ENCODE measurements at regions of chr19 and their contacts with region 1.

Region 1: GRCh38 chr19:52189735-52190486 is at the start of gene PPP2R1A:
- DNase-seq: peak; percentile 99
- H3K4me3 Mint-ChIP-seq: peak within 1 kb of the TSS; percentile 97
- H3K27ac Mint-ChIP-seq: peak within 1 kb of the TSS; percentile 99
- H3K4me1 Mint-ChIP-seq: peaks cover 29% of the 10 kb centered on the region
- H3K27me3 Mint-ChIP-seq: no peaks in the 10 kb centered on the region
- total RNA-seq, gene PPP2R1A: 226 and 237 TPM in 2 replicates

Region 2: DNA sequence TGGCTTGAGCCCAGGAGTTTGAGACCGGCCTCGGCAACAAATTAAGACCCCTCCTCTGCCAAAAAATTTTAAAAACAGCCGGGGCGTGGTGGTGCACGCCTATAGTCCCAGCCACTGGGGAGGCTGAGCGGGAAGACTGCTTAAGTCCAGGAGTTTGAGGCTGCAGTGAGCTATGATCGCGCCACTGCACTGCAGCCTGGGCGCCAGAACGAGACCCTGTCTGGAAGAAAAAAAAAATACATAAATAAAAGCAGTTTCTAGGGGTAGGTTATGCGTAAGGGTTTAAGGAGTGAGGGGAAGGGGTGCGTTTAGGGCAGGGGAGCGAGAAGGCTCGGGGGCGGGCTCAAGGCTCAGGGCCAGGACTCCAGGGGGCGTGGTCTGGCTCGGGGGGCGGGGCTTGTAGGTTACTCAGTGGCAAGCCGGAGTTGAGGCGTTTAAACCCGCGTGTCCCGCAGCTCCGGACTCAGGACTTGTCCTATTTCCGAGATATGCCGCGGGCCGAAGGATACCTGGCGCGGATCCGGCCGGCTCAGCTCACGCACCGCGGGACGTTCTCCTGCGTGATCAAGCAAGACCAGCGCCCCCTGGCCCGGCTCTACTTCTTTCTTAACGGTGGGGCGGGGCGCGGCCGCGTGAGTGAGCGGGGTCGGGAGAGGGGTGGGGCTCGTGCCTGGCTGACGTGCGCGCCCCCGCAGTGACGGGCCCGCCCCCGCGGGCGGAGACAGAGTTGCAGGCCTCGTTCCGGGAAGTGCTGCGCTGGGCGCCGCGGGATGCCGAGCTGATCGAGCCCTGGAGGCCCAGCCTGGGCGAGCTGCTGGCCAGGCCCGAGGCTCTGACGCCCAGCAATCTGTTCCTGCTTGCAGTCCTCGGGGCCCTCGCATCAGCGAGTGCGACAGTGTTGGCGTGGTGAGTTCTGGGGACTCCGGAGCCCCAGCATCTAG is 486.1 kb before region 1 on chr19:
- intact Hi-C with region 1: loop called (anchors 1 kb)
- DNase-seq: peak; percentile 99
- H3K4me3 Mint-ChIP-seq: peak overlapping the region; percentile 90
- H3K27ac Mint-ChIP-seq: peak overlapping the region; percentile 95
- H3K4me1 Mint-ChIP-seq: peaks cover 24% of the 10 kb centered on the region
- H3K27me3 Mint-ChIP-seq: peaks cover 3% of the 10 kb centered on the region

Region 3: DNA sequence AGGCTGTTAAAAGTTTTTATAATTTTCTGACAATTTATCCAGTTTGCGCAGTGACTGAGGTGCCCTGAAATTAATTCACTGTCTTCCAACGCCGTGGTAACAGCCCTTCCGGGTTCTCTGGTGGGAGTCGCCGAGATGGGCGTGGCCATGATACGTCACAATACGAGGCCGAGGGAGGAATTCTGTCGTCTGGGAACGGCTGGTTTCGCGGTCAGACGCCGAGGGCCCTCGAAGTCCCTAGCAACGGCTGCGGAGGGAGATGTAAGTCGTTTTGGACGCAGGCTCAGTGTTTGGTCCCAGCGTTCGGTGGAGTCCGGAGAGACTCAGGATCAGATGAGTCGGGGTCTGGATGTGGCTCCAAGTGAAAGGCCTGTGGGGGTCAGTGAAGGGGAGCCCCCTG is 240.9 kb before region 1 on chr19:
- intact Hi-C with region 1: no loop called
- DNase-seq: no peak
- H3K4me3 Mint-ChIP-seq: no peak overlapping the region
- H3K27ac Mint-ChIP-seq: no peak overlapping the region
- H3K4me1 Mint-ChIP-seq: no peaks in the 10 kb centered on the region
- H3K27me3 Mint-ChIP-seq: no peaks in the 10 kb centered on the region

Region 4: GRCh38 chr19:52028027-52028779 is 161.7 kb before region 1 on chr19 and contains the start of gene ZNF614:
- intact Hi-C with region 1: loop called (anchors 1 kb)
- DNase-seq: peak; percentile 96
- H3K4me3 Mint-ChIP-seq: peak within 1 kb of the TSS; percentile 94
- H3K27ac Mint-ChIP-seq: peak within 1 kb of the TSS; percentile 95
- H3K4me1 Mint-ChIP-seq: peaks cover 15% of the 10 kb centered on the region
- H3K27me3 Mint-ChIP-seq: no peaks in the 10 kb centered on the region
- total RNA-seq, gene ZNF614: 11.0 and 12.7 TPM in 2 replicates

Region 5: DNA sequence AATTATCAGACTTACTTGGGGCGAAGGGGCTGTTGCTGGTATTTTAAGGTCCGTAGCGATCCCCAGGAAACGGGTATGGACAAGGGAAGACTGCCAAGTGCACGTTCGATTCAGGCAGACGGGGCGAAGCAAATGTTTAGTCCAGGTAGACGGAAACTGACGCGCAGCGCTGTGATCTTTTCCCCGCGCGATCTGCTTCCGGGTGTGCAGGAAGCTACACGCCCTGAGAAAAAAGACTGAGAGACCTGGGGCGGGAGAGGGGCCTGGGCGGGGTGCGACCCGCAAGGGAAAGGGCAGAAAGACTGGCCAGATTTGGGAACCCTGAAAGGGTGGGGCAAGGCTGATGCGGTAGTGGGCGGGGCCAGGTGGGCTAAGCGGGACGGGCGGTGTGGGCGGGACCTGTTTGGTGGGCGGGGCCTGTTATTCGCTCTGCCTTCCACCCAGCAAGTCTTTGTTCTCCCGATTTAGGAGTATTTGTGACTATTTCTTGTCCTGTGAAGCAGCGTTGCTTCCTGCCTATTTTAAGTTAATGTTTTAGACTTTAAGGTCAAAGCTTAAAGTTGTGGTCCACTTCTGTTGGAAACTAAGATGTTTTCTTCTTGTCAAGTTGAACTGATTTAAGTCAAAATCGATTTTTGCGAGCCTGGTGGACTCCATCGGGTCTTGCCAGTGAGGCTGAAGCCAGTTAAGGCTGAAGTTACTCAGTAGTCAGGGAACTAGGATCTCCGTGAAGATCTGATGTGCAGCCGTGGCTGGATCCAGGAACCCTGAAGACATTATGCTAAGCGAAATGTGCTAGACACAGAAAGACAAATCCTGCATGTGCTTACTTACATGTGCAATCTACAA is 18.4 kb before region 1 on chr19 and contains the start of gene ZNF836:
- intact Hi-C with region 1: loop called (anchors 1 kb)
- DNase-seq: peak; percentile 96
- H3K4me3 Mint-ChIP-seq: peak within 1 kb of the TSS; percentile 93
- H3K27ac Mint-ChIP-seq: peak within 1 kb of the TSS; percentile 94
- H3K4me1 Mint-ChIP-seq: peaks cover 19% of the 10 kb centered on the region
- H3K27me3 Mint-ChIP-seq: no peaks in the 10 kb centered on the region
- total RNA-seq, gene ZNF836: 6.3 and 6.7 TPM in 2 replicates

Region 6: DNA sequence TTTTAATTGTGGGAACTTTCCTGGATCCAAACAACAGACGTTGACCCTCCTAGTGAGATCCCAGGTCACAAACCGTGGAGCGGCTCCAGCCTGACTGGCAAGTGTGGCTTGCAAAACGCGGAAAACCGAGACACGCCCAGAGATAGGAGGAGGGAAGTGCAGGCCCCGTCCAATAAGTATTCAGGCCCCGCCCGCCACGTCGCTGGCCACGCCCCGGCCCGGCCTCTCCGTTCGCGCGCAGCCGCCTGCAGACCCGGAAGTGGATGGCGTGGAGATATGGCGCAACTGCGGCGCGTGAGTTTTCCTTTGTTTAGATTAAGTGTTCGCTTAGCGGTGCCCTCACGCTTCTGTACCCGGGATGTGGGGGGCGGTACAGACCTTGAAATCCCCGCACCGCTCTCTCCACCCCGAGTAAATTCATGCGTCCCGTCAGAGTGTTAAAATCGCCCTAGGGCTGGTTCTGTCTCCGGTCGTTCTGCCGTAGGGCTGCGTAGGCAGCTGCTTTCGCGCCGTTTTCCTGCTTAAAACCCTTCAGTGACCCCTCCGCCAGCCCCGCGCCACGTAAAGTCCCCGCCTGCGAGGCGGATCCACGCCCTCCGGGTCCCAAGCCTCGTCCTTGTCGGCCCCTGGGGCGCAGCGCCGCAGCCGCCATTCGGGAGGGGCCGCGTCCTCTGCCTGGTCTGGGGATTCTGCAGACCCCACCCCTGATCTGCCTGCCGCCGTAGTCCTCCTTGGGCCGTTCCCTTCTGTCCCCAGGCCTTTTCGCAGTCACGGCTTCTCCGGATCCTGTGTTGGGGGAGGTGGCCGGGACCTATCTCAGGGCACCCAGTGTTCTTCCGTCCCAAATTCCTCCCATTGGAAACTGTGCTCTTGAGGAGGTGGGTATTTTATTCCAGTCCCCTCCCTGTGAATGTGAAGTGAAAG is 79.7 kb after region 1 on chr19 and contains the start of gene ZNF766:
- intact Hi-C with region 1: loop called (anchors 1 kb)
- DNase-seq: peak; percentile 99
- H3K4me3 Mint-ChIP-seq: peak within 1 kb of the TSS; percentile 99
- H3K27ac Mint-ChIP-seq: peak within 1 kb of the TSS; percentile 96
- H3K4me1 Mint-ChIP-seq: peaks cover 11% of the 10 kb centered on the region
- H3K27me3 Mint-ChIP-seq: no peaks in the 10 kb centered on the region
- total RNA-seq, gene ZNF766: 18.2 and 19.9 TPM in 2 replicates

Region 7: DNA sequence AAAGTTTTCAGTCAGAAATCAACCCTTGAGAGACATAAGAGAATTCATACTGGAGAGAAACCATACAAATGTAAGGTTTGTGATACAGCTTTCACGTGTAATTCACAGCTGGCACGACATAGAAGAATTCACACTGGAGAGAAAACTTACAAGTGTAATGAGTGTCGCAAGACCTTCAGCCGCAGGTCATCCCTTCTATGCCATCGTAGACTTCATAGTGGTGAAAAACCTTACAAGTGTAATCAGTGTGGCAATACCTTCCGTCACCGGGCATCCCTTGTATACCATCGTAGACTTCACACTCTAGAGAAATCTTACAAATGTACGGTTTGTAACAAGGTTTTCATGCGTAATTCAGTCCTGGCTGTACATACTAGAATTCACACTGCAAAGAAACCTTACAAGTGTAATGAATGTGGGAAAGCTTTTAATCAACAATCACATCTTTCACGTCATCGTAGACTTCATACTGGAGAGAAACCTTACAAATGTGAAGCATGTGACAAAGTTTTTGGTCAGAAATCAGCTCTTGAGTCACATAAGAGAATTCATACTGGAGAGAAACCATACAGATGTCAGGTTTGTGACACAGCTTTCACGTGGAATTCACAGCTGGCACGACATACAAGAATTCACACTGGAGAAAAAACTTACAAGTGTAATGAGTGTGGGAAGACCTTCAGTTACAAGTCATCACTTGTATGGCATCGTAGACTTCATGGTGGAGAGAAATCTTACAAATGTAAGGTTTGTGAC is 364.5 kb after region 1 on chr19:
- intact Hi-C with region 1: no loop called
- DNase-seq: no peak
- H3K4me3 Mint-ChIP-seq: no peak overlapping the region
- H3K27ac Mint-ChIP-seq: no peak overlapping the region
- H3K4me1 Mint-ChIP-seq: no peaks in the 10 kb centered on the region
- H3K27me3 Mint-ChIP-seq: no peaks in the 10 kb centered on the region

Measured in activated CD4-positive, alpha-beta T cell treated with anti-CD3 and anti-CD28 coated beads, Interleukin-2, amount 10 ng/mL, durations not matched to agents 24 days and 14 days (primary cell).